Heart right ventricle (tissue), 16 donors: ENCODE measurements at regions of chr3 and their contacts with region 1.

Region 1: GRCh38 chr3:134299185-134299887 is 48.7 kb upstream of the RYK start:
- DNase-seq: no peak
- ATAC-seq: peak in 7 of 8 donors; percentile 39 to 86 (median 72)
- H3K4me3 ChIP-seq: no peak overlapping the region
- H3K27ac ChIP-seq: no peak overlapping the region
- H3K4me1 ChIP-seq: peaks cover 0 to 7% (median 0%) of the 10 kb centered on the region in 9 donors
- H3K27me3 ChIP-seq: no peaks in the 10 kb centered on the region
- CTCF ChIP-seq: peak in 7 of 9 donors; percentile 26 to 63 (median 47)

Region 2: GRCh38 chr3:134197681-134198261 is 101.6 kb before region 1 on chr3:
- intact Hi-C with region 1: loop called in 2 of 10 experiments (anchors 5 kb)
- DNase-seq: peak in 1 of 2 donors; percentile 35
- ATAC-seq: peak in 7 of 8 donors; percentile 51 to 88 (median 71)
- H3K4me3 ChIP-seq: no peak overlapping the region
- H3K27ac ChIP-seq: no peak overlapping the region
- H3K4me1 ChIP-seq: peaks cover 0 to 7% (median 0%) of the 10 kb centered on the region in 9 donors
- H3K27me3 ChIP-seq: no peaks in the 10 kb centered on the region
- CTCF ChIP-seq: peak; percentile 45 to 81 (median 74)

Region 3: GRCh38 chr3:134250717-134251220 is 48.6 kb before region 1 on chr3 and contains the start of gene RYK:
- intact Hi-C with region 1: loop called in 5 of 10 experiments (anchors 5 kb)
- DNase-seq: peak; percentile 74 to 86
- ATAC-seq: peak; percentile 92 to 96 (median 95)
- H3K4me3 ChIP-seq: peak within 1 kb of the TSS; percentile 64 to 84 (median 74)
- H3K27ac ChIP-seq: peak within 1 kb of the TSS; percentile 40 to 96 (median 90)
- H3K4me1 ChIP-seq: peaks cover 3 to 62% (median 41%) of the 10 kb centered on the region in 9 donors
- H3K27me3 ChIP-seq: no peaks in the 10 kb centered on the region
- CTCF ChIP-seq: no peak
- total RNA-seq, gene RYK: 33.8 to 45.8 (median 37.5) TPM

Region 4: GRCh38 chr3:134258761-134259347 is 40.5 kb before region 1 on chr3:
- intact Hi-C with region 1: loop called in 6 of 10 experiments (anchors 2 to 5 kb)
- DNase-seq: no peak
- ATAC-seq: no peak
- H3K4me3 ChIP-seq: no peak overlapping the region
- H3K27ac ChIP-seq: no peak overlapping the region
- H3K4me1 ChIP-seq: peaks cover 0 to 5% (median 0%) of the 10 kb centered on the region in 9 donors
- H3K27me3 ChIP-seq: no peaks in the 10 kb centered on the region
- CTCF ChIP-seq: no peak